Heart right ventricle (tissue), 16 donors: ENCODE measurements at regions of chr12 and their contacts with region 1.

Region 1: DNA sequence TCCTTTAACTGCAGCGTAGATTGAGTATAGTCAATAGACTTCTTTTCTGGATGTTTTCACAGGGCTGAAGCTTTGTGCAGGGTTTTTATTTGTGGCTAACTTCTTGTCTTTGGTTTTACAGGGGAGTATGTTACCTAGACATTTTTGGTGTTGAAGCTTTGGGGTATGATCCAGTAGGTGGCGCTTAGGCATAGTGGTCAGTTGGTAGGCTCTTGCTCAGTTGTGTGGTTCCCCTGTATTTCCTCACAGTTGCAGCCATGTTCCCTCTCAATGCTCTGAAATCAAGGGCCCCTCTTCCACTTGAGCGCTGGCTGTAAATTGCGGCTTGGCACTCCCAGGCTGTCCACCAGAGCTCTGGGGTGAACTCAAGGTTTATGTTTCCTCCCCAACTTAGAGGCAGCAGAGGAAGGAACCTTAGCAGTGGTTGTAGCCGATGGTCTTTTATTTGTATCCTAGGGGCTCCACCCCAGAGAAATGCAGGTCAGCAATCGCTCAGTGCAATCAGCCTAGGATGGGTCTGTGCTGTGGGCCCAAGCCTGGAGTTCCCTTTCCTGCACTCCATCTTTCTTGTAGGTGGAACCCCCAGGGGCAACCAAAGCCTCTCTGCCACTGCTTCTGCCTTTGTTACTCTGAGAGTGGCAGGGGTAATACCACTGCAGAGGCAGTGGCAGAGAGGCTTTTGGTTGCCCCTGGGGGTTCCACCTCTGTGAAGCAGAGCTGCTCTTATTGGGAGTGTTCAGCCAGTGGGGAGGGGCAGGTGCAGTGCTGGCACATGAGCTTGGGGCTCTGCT is 55.1 kb downstream of the CMAS start:
- DNase-seq: peak in 1 of 2 donors; percentile 54
- ATAC-seq: peak; percentile 35 to 81 (median 54)
- H3K4me3 ChIP-seq: no peak overlapping the region
- H3K27ac ChIP-seq: no peak overlapping the region
- H3K4me1 ChIP-seq: peaks cover 0 to 9% (median 0%) of the 10 kb centered on the region in 9 donors
- H3K27me3 ChIP-seq: peaks cover 0 to 11% (median 3%) of the 10 kb centered on the region in 7 donors
- CTCF ChIP-seq: peak; percentile 15 to 67 (median 58)

Region 2: GRCh38 chr12:22334410-22335290 is 233.5 kb after region 1 on chr12 and contains the start of gene ST8SIA1:
- intact Hi-C with region 1: loop called in 9 of 10 experiments (anchors 2 to 10 kb)
- DNase-seq: peak; percentile 29 to 50
- ATAC-seq: peak; percentile 55 to 66 (median 60)
- H3K4me3 ChIP-seq: peak within 1 kb of the TSS; percentile 52 to 72 (median 62)
- H3K27ac ChIP-seq: peak within 1 kb of the TSS in 9 of 10 donors; percentile 7 to 75 (median 54)
- H3K4me1 ChIP-seq: peaks cover 0 to 16% (median 6%) of the 10 kb centered on the region in 9 donors
- H3K27me3 ChIP-seq: peaks cover 0 to 46% (median 16%) of the 10 kb centered on the region in 7 donors
- CTCF ChIP-seq: no peak
- total RNA-seq, gene ST8SIA1: 1.0 to 4.9 (median 2.0) TPM